ENCODE measurements at regions of chr7 and their contacts with region 1.

Region 1: DNA sequence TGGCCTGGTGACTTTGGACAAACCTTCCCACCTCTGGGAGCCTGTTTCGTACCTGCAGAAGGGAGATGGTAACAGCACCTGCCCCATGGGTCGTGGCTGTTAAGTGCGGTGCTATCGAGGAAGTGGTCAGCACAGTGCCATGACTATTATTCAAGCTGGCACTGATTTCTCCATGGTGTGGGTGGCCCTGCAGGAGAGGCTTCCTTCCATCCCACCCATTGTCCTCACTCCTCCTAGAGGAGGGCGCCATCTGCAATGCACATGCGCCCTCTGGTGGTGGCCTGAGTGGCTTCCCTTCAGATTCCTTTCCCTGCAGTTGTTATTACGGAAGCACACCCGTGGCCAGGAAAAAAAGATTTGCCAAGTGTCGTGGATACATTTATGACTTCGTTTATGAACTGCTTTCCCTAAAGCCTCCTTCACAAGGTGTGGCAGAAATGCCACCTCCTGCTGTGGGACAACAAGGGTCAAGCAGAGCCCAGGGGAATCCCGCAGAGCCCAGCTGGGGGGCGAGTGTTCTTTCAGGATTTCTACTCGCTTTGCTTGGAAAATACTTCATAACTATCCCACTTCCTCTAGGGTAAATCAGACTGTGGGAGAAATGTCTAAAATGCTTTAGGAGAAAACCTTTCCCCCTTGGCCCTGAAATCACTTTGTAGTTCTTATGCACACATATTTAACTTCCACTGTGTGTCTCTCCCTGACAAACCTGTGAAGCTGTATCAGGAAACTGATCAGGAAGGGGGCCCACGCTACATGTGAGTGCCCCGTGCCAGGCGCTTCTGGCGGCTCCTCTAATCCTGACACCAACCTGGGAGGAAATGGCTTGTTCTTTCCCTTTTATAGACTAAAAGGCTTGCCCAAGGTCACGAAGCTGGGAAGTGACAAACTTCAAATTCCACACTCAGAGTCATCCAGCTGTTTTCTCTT is 98.0 kb upstream of the ANLN start:
- DNase-seq: peak; percentile 82
- ATAC-seq: peak; percentile 54
- H3K4me3 Mint-ChIP-seq: peak overlapping the region; percentile 55
- H3K27ac Mint-ChIP-seq: no peak overlapping the region
- H3K4me1 Mint-ChIP-seq: peaks cover 30% of the 10 kb centered on the region
- H3K27me3 Mint-ChIP-seq: no peaks in the 10 kb centered on the region
- CTCF ChIP-seq: peak; percentile 95

Region 2: GRCh38 chr7:35985126-35985754 is 306.4 kb before region 1 on chr7:
- CTCF ChIA-PET with region 1: interaction called, 107 read pairs
- POLR2A ChIA-PET with region 1: interaction called, 3 read pairs
- intact Hi-C with region 1: loop called (anchors 1 kb)
- DNase-seq: peak; percentile 83
- ATAC-seq: peak; percentile 100
- H3K4me3 Mint-ChIP-seq: no peak overlapping the region
- H3K27ac Mint-ChIP-seq: no peak overlapping the region
- H3K4me1 Mint-ChIP-seq: no peaks in the 10 kb centered on the region
- H3K27me3 Mint-ChIP-seq: no peaks in the 10 kb centered on the region
- CTCF ChIP-seq: peak; percentile 79

Region 3: DNA sequence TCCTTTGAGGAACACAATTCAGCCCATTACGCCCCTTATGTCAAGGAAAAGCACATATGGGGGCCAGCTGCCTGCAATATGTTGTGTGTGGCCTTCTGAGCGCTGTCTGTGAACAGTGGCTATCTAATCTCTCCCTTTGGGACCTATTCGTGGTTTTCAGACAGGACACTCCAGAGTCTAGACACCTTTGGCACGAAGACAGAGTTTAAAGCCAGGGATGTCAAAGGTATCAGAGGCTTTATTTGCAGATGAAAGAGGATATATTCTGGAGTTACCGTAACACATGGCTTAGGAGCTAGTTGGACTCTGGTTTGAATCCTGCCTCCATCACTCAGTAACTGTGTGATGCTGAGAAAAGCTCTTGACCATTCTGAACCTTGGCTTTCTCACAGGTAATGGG is 153.4 kb before region 1 on chr7:
- CTCF ChIA-PET with region 1: no interaction called
- POLR2A ChIA-PET with region 1: no interaction called
- intact Hi-C with region 1: no loop called
- DNase-seq: no peak
- ATAC-seq: no peak
- H3K4me3 Mint-ChIP-seq: no peak overlapping the region
- H3K27ac Mint-ChIP-seq: no peak overlapping the region
- H3K4me1 Mint-ChIP-seq: no peaks in the 10 kb centered on the region
- H3K27me3 Mint-ChIP-seq: no peaks in the 10 kb centered on the region
- CTCF ChIP-seq: no peak

Region 4: DNA sequence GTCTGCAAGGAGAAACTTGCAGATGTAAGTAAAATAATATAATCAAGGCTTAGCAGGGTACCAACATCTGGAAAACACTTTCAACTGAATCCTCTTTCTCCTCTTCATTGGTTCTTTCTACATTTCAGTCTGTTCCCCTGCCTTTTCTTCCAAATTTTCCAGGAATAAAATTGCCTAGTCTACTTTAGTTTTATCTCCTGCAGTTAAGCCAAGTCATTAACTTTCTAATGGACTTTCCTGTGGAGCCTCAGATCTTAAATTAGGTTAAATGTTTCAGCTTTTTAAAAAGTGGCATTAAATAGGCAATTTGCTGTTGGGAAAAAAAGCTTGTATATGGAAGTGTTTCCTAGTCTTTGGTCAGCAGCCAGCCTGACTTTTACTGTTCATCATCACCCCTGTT is 67.8 kb before region 1 on chr7:
- CTCF ChIA-PET with region 1: no interaction called
- POLR2A ChIA-PET with region 1: no interaction called
- intact Hi-C with region 1: no loop called
- DNase-seq: no peak
- ATAC-seq: no peak
- H3K4me3 Mint-ChIP-seq: no peak overlapping the region
- H3K27ac Mint-ChIP-seq: no peak overlapping the region
- H3K4me1 Mint-ChIP-seq: no peaks in the 10 kb centered on the region
- H3K27me3 Mint-ChIP-seq: no peaks in the 10 kb centered on the region
- CTCF ChIP-seq: no peak

Region 5: GRCh38 chr7:36265680-36266079 is 26.0 kb before region 1 on chr7:
- CTCF ChIA-PET with region 1: no interaction called
- POLR2A ChIA-PET with region 1: no interaction called
- intact Hi-C with region 1: no loop called
- DNase-seq: no peak
- ATAC-seq: no peak
- H3K4me3 Mint-ChIP-seq: no peak overlapping the region
- H3K27ac Mint-ChIP-seq: no peak overlapping the region
- H3K4me1 Mint-ChIP-seq: peaks cover 5% of the 10 kb centered on the region
- H3K27me3 Mint-ChIP-seq: no peaks in the 10 kb centered on the region
- CTCF ChIP-seq: no peak

Region 6: DNA sequence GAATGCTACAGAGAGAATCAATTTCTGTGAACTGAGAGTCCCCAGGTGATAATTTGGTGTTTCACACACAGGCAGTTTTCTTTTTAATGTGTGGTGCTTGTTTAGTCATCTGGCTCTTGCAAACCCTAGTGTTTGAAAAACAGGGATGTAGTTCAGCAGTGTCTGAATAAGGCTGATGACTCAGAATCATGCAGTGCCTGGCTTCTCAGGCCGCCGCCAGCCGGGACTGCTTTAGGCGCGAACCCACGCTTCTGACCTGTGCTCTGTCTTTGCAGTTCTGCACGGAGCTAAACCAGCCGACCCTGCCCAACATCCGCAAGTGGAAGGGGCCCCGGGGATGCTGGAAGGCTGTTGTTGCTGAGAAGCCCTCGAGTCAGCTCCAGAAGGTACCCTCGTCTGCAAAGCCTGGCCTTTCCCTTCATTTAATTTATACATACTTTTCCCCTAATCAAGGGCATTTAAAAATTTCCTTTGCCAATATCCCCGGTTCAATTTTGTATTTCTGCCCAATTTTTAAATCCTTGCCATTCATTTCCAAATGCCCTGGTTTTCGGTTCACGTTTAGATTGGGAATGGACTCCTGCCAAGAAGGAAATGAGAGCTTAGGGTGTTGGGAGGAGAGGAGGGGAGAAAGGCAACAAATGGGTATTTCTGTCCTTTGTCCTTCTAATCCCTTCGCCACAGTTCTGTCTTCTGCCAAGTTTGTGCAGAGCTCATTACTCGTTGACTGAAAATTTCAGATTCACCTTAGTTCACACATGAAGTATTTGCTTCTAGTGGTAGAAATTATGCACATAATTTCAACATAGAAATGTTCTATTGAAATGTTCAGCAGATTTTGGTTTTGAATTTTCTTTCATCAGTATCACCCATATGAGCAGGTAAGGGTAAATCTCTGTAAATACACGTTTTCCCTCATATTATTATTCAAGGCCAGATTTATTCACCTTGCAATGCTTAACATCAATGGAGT is 10.5 kb before region 1 on chr7:
- CTCF ChIA-PET with region 1: interaction called, 11 read pairs
- POLR2A ChIA-PET with region 1: no interaction called
- intact Hi-C with region 1: no loop called
- DNase-seq: no peak
- ATAC-seq: no peak
- H3K4me3 Mint-ChIP-seq: no peak overlapping the region
- H3K27ac Mint-ChIP-seq: no peak overlapping the region
- H3K4me1 Mint-ChIP-seq: peaks cover 14% of the 10 kb centered on the region
- H3K27me3 Mint-ChIP-seq: no peaks in the 10 kb centered on the region
- CTCF ChIP-seq: no peak

Region 7: DNA sequence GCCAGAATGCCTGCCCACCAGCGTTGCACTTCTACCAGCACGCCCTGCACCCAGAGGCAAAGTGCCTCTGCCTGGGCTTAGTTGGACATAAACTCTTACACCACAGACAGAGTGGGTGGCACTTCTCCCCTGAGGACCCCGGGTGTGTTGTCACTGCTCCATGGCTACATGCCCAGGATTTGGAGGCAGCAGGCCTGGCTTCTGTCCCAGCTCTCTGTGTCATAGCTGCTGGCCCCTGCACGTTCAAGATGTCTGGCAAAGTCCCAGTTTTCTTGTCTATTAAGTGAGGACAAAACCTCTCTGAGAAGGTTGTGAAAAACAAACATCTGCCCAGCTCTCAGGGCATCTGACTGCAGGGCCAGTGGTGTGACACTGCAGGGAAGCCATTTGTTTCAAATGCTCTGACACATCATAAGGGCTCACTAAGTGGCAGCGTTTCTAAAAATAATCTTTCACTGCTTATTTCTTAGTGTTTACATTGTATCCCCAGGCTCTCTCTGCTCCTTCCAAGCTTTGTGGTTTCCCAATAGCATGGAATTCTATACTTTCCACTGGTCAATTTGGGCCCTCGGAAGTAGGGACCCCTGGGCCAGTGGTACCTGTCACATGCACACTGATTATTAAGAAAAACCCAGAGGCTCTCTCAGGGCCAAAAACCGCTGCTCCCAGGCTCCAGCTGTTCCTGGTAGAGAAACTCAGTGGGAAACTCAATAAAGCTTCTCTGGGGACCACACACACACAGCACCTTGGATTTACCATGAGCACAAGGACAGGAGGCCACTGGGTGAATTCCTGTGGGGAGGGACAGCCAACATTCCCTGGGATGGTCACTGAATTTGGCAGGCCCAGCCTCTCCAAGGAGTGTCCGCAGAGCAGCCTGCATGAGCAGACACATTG is 11.8 kb after region 1 on chr7:
- CTCF ChIA-PET with region 1: interaction called, 20 read pairs
- POLR2A ChIA-PET with region 1: no interaction called
- intact Hi-C with region 1: no loop called
- DNase-seq: no peak
- ATAC-seq: no peak
- H3K4me3 Mint-ChIP-seq: no peak overlapping the region
- H3K27ac Mint-ChIP-seq: no peak overlapping the region
- H3K4me1 Mint-ChIP-seq: no peaks in the 10 kb centered on the region
- H3K27me3 Mint-ChIP-seq: no peaks in the 10 kb centered on the region
- CTCF ChIP-seq: no peak

Measured in activated CD8-positive, alpha-beta T cell treated with anti-CD3 and anti-CD28 coated beads for 36 hours (primary cell).